IMR-90 (cell line): ENCODE measurements at regions of chr18 and their contacts with region 1.

Region 1: DNA sequence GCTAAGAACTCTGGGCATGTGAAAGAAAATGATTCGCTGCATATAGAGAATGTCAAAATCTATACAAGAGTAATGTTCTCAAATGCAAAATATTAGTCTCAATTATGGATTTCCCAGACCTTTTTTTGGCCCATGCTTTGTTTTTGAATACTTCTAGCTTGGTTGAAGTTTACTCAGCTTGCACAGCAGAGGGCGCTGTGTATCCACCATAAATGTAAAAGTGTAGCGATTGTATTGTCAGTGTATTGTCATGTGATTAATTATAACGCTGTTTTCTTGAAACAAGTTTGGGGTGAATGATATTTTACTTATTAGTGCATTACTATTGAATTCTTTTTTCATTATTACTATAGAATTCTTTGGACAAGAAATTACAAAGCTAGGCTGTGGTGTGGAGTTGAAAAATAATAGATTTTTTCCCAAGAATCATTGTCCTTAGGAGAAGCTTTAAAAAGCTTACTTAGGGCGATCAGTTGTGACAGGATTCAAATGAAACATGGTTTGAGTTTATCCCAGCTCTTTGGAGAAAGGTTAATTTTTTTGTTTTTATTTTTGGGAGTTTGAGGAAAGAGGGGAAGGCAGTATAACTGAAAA is 98.3 kb downstream of the PIK3C3 start:
- DNase-seq: peak; percentile 62
- ATAC-seq: peak; percentile 80
- H3K4me3 ChIP-seq: no peak overlapping the region
- H3K27ac ChIP-seq: no peak overlapping the region
- H3K4me1 ChIP-seq: no peaks in the 10 kb centered on the region
- H3K27me3 ChIP-seq: no peaks in the 10 kb centered on the region
- CTCF ChIP-seq: peak; percentile 76
- POLR2A ChIP-seq: no peak
- RAD21 ChIP-seq: peak; percentile 62

Region 2: GRCh38 chr18:41965634-41966255 is 87.5 kb before region 1 on chr18:
- CTCF ChIA-PET with region 1: interaction called, 17 read pairs
- POLR2A ChIA-PET with region 1: no interaction called
- dilution Hi-C with region 1: no loop called
- in situ Hi-C with region 1: no loop called
- intact Hi-C with region 1: no loop called
- DNase-seq: no peak
- ATAC-seq: no peak
- H3K4me3 ChIP-seq: no peak overlapping the region
- H3K27ac ChIP-seq: no peak overlapping the region
- H3K4me1 ChIP-seq: peaks cover 7% of the 10 kb centered on the region
- H3K27me3 ChIP-seq: no peaks in the 10 kb centered on the region
- CTCF ChIP-seq: no peak
- POLR2A ChIP-seq: no peak
- RAD21 ChIP-seq: no peak

Region 3: GRCh38 chr18:42068030-42068429 is 14.7 kb after region 1 on chr18:
- CTCF ChIA-PET with region 1: interaction called, 13 read pairs
- POLR2A ChIA-PET with region 1: no interaction called
- dilution Hi-C with region 1: no loop called
- in situ Hi-C with region 1: no loop called
- intact Hi-C with region 1: no loop called
- DNase-seq: no peak
- ATAC-seq: no peak
- H3K4me3 ChIP-seq: no peak overlapping the region
- H3K27ac ChIP-seq: no peak overlapping the region
- H3K4me1 ChIP-seq: no peaks in the 10 kb centered on the region
- H3K27me3 ChIP-seq: no peaks in the 10 kb centered on the region
- CTCF ChIP-seq: no peak
- POLR2A ChIP-seq: no peak
- RAD21 ChIP-seq: no peak

Region 4: DNA sequence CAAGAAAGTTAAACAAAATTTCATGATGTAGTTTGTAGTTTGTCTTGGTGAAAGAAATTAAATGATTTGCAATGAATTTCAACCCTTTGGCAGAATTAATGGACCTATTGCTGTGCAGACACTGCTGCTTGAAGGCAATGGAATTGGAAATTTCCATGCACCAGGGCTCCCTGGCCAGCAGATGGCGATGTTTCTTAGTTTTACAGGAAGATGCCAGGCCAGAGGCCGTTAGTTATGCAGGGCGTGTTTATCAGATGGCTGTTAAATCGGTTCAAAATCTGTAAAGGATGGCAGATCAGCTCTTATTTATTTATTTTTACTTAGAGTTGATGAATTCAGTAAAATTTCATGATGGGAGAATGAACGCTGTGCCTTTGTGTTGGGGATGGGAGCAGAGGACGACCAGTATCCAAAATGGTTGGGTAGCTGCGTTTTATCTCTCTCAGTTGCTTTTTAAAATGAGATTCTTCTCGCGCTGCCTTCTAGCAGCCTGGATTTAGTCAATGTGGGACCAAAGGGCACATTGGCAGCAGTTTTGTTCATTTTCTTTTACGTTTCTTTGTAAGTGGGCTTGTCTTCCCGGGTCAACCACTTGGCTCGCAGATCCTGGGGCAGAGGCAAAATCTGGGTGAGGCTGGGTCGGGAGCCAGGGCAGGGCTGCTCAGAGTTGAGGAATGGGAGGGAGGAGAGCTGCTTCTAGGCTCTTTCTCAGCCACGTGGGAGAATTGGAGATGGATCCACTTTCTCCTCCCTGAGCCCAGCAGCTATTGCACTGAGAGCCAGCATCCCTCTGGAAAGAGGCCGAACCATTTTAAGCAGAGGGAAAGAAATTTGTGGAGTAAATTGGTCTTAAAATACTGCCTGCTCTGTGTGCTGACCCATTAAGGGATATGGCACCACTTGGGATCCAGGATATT is 245.7 kb after region 1 on chr18:
- CTCF ChIA-PET with region 1: interaction called, 4 read pairs
- POLR2A ChIA-PET with region 1: no interaction called
- dilution Hi-C with region 1: no loop called
- in situ Hi-C with region 1: no loop called
- intact Hi-C with region 1: loop called (anchors 1 kb)
- DNase-seq: peak; percentile 66
- ATAC-seq: peak; percentile 89
- H3K4me3 ChIP-seq: no peak overlapping the region
- H3K27ac ChIP-seq: no peak overlapping the region
- H3K4me1 ChIP-seq: no peaks in the 10 kb centered on the region
- H3K27me3 ChIP-seq: no peaks in the 10 kb centered on the region
- CTCF ChIP-seq: peak; percentile 81
- POLR2A ChIP-seq: no peak
- RAD21 ChIP-seq: peak; percentile 63

Region 5: GRCh38 chr18:43563780-43564179 is 1510.5 kb after region 1 on chr18:
- CTCF ChIA-PET with region 1: no interaction called
- POLR2A ChIA-PET with region 1: no interaction called
- dilution Hi-C with region 1: no loop called
- in situ Hi-C with region 1: no loop called
- intact Hi-C with region 1: loop called (anchors 5 kb)
- DNase-seq: peak; percentile 6
- ATAC-seq: peak; percentile 72
- H3K4me3 ChIP-seq: no peak overlapping the region
- H3K27ac ChIP-seq: no peak overlapping the region
- H3K4me1 ChIP-seq: no peaks in the 10 kb centered on the region
- H3K27me3 ChIP-seq: no peaks in the 10 kb centered on the region
- CTCF ChIP-seq: peak; percentile 32
- POLR2A ChIP-seq: no peak
- RAD21 ChIP-seq: peak; percentile 52